Ovary (tissue), 10 donors: ENCODE measurements at regions of chr13 and their contacts with region 1.

Region 1: DNA sequence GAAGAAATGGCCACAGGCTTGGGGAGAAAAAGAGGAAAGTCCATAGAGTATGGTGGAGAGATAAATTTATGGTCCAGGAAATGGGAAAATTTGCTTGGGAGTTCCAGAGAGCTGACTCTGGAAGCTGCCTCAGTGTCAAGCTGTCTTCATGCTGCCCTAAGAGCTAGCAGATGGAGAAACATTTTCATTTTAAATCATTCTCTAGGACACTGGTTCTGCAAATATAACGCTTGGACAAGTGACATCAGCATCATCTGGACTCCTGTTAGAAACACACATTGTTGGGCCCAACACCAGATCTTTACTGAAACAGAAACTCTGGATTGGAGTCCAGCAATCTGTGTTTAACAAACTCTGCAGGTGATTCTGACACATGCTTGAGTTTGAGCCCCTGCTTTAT is 592.0 kb upstream of the KLF12 start:
- DNase-seq: no peak
- H3K4me3 ChIP-seq: no peak overlapping the region
- H3K27ac ChIP-seq: no peak overlapping the region
- H3K4me1 ChIP-seq: no peaks in the 10 kb centered on the region
- H3K27me3 ChIP-seq: no peaks in the 10 kb centered on the region
- CTCF ChIP-seq: no peak
- EP300 ChIP-seq: no peak
- POLR2A ChIP-seq: no peak

Region 2: DNA sequence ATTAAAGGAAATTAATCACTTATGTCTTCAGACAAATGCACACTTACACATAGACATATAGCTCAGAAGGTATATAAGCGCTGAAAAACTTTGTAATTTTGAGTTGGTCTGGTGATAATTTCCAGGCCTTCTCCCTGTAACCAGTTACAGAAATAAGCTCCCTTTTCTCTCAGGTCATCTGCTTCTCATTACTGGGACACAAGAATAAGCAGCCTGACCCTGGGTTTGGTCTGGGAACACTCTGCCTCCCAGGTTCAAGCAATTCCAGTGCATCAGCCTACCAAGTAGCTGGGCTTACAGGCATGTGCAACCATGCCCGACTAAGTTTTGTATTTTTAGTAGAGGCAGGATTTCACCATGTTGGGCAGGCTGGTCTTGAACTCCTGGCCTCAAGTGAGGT is 1184.4 kb after region 1 on chr13:
- intact Hi-C with region 1: loop called in 1 of 4 experiments (anchors 5 kb)
- DNase-seq: no peak
- H3K4me3 ChIP-seq: no peak overlapping the region
- H3K27ac ChIP-seq: no peak overlapping the region
- H3K4me1 ChIP-seq: peaks cover 4% of the 10 kb centered on the region
- H3K27me3 ChIP-seq: no peaks in the 10 kb centered on the region
- CTCF ChIP-seq: no peak
- EP300 ChIP-seq: no peak
- POLR2A ChIP-seq: no peak